Left ventricle myocardium superior (tissue), 1 donor: ENCODE measurements at regions of chr3 and their contacts with region 1.

Region 1: GRCh38 chr3:149273096-149273751 is 51.6 kb upstream of the CP start:
- DNase-seq: no peak
- ATAC-seq: peak; percentile 90

Region 2: DNA sequence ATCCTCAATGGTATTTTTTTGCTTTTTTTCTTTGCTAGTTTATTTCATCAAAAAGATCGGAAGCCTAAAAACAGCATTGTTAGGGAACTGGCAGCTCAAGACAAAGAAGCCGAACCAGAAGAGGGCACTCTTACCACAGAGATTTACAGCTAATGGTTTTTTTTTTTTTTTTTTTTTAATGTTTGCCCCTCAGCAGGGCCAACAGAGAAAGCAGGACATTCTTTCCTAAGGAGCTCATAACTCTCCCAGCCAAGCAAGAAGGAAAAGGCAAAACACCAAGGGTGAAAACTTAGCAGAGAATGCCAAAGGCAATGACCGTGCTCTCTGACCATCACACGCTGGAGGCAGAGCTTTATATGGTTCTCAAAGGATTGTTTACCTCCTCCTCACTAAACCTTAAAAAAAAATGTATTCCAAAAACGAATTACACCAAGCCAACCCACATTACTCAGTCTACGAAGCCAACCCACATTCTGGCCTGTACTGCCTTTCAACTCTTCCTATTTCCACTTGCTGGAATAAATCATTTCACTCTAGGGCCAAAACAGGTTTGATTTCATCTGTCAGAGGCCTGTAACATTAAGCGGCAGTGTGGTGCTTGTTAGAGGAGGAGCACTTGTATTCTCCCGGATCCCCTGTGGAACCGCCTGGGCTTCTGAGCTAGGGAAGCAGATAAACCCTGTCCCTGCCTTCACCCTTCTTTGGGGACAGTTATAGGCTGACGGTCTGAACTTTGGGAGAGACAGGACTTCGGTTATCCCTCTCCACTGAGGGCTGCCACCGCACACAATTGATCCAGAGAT is 317.5 kb before region 1 on chr3:
- intact Hi-C with region 1: loop called (anchors 5 kb)
- DNase-seq: no peak
- ATAC-seq: peak; percentile 95

Region 3: GRCh38 chr3:149120051-149120972 is 152.9 kb before region 1 on chr3:
- intact Hi-C with region 1: loop called (anchors 2 kb)
- DNase-seq: no peak
- ATAC-seq: peak; percentile 75